Left cardiac atrium (tissue), 4 donors: ENCODE measurements at regions of chr17 and their contacts with region 1.

Region 1: DNA sequence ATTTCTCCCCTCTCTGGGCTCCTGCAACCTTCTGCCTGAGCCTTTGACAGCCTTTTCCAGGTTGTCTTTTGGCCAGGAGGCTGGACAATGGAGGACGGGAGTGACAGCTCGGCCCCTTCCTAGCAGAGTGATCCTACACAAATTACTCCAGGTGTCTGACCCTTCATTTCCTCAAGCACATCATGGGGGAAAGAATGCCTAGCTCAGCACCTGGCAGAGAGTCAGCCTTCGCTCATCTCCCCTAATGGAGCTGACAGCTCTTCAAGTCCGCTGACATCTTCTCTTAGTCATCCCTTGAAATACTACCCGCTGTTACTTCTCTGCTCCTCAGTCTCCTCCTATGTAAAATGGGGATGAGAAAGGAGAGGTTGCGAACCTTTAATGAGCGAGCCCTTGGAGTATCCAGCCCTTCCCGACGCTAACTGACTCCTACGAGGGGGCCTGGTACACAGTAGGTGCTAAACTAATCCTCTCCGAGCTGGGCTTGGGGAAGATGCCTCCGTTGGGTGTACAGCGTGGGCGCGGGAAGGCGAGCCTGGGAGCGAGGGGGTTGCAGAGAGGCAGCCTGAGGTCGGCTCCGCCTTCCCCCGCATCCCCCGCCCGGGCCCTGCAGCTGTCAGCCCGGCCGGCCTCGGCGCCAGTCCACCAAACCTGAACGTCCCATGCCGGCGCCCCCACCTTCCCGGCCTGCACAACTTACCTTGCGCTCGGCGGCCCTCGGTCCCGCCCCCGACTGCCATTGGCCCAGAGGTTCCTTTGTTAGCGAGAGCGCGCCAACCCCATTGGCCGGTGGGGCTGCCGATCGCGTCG is 481 bp upstream of the MPRIP start:
- DNase-seq: peak; percentile 100
- ATAC-seq: peak; percentile 97 to 98

Region 2: GRCh38 chr17:17108451-17109049 is 66.8 kb after region 1 on chr17:
- intact Hi-C with region 1: loop called in 1 of 2 experiments (anchors 10 kb)
- DNase-seq: peak; percentile 17
- ATAC-seq: peak in 1 of 2 donors; percentile 17

Region 3: GRCh38 chr17:17252149-17252661 is 210.4 kb after region 1 on chr17:
- intact Hi-C with region 1: no loop called
- DNase-seq: no peak
- ATAC-seq: peak; percentile 27 to 83